HCT116 (cell line): ENCODE measurements at regions of chr22 and their contacts with region 1.

Region 1: GRCh38 chr22:26109686-26110315 is 59.5 kb upstream of the SEZ6L start:
- DNase-seq: no peak
- ATAC-seq: no peak
- H3K4me3 ChIP-seq: no peak overlapping the region
- H3K27ac ChIP-seq: no peak overlapping the region
- H3K4me1 ChIP-seq: no peaks in the 10 kb centered on the region
- H3K27me3 ChIP-seq: peaks cover 18% of the 10 kb centered on the region
- CTCF ChIP-seq: no peak
- POLR2A ChIP-seq: no peak
- RAD21 ChIP-seq: no peak

Region 2: GRCh38 chr22:26054841-26055605 is 54.8 kb before region 1 on chr22:
- CTCF ChIA-PET with region 1: no interaction called
- POLR2A ChIA-PET with region 1: no interaction called
- RAD21 ChIA-PET with region 1: no interaction called
- intact Hi-C with region 1: loop called (anchors 10 kb)
- DNase-seq: no peak
- ATAC-seq: no peak
- H3K4me3 ChIP-seq: no peak overlapping the region
- H3K27ac ChIP-seq: no peak overlapping the region
- H3K4me1 ChIP-seq: no peaks in the 10 kb centered on the region
- H3K27me3 ChIP-seq: peaks cover 58% of the 10 kb centered on the region
- CTCF ChIP-seq: no peak
- POLR2A ChIP-seq: no peak
- RAD21 ChIP-seq: no peak

Region 3: GRCh38 chr22:26619516-26619915 is 509.7 kb after region 1 on chr22:
- CTCF ChIA-PET with region 1: no interaction called
- POLR2A ChIA-PET with region 1: no interaction called
- RAD21 ChIA-PET with region 1: no interaction called
- intact Hi-C with region 1: no loop called
- DNase-seq: no peak
- ATAC-seq: no peak
- H3K4me3 ChIP-seq: no peak overlapping the region
- H3K27ac ChIP-seq: no peak overlapping the region
- H3K4me1 ChIP-seq: no peaks in the 10 kb centered on the region
- H3K27me3 ChIP-seq: no peaks in the 10 kb centered on the region
- CTCF ChIP-seq: no peak
- POLR2A ChIP-seq: no peak
- RAD21 ChIP-seq: no peak